Right cardiac atrium (tissue), 5 donors: ENCODE measurements at regions of chr22 and their contacts with region 1.

Region 1: GRCh38 chr22:37701141-37701786 is 4.4 kb downstream of the TRIOBP start:
- DNase-seq: no peak
- ATAC-seq: no peak
- H3K4me3 ChIP-seq: no peak overlapping the region
- H3K27ac ChIP-seq: no peak overlapping the region
- H3K4me1 ChIP-seq: no peaks in the 10 kb centered on the region
- H3K27me3 ChIP-seq: no peaks in the 10 kb centered on the region

Region 2: DNA sequence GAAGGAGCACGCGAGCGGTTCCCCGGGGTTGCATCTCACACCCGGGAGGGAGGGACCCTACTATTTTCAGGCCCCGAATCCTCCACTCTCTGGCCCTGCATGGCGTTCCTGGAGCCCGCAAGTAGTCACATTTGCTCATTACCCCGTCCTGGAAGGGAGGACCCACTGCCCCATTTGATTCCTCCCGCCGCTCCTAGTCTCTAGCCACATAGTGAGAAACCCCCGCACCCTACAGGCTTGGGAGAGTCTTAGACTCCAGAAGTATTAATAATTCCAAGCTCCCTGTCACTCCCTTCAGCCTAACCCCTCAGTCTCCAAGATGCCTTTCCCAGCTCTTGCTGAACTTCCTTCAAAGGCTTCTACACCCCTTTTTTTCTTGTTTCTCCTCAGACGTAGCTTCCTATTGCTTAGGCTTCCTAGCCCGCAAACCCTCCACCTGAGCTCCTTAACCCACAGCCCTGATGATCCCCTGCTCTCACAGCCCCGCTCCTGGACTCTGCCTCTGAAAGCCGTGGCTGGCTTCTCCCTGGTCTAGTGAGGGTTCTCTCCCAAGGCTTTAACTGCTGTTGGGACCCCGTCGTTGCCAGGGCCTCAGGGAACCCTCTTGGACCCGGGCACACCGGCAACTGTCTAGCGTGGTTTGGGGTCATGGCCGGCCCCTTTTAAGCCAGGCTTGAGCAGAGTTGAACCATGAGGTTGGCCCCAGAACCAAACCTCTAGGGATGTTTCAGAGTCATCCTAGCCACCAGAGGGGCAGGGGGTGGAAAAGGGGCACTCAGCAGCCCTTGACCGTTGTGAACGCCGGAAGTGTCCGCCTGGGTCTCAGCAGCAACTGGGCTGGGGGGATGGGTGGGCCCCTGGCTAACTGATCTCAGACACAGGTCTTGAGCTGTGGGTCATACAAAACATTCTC is 91.8 kb before region 1 on chr22:
- intact Hi-C with region 1: no loop called
- DNase-seq: peak in 1 of 3 donors; percentile 62
- ATAC-seq: peak in 1 of 2 donors; percentile 0
- H3K4me3 ChIP-seq: peak overlapping the region; percentile 90
- H3K27ac ChIP-seq: peak overlapping the region; percentile 86
- H3K4me1 ChIP-seq: peaks cover 4% of the 10 kb centered on the region
- H3K27me3 ChIP-seq: no peaks in the 10 kb centered on the region

Region 3: GRCh38 chr22:37741312-37741795 is 40.1 kb after region 1 on chr22:
- intact Hi-C with region 1: loop called in 1 of 4 experiments (anchors 5 kb)
- DNase-seq: peak; percentile 88 to 94 (median 91)
- ATAC-seq: peak; percentile 45 to 50
- H3K4me3 ChIP-seq: no peak overlapping the region
- H3K27ac ChIP-seq: no peak overlapping the region
- H3K4me1 ChIP-seq: peaks cover 8% of the 10 kb centered on the region
- H3K27me3 ChIP-seq: no peaks in the 10 kb centered on the region